Spleen (tissue), 13 donors: ENCODE measurements at regions of chr20 and their contacts with region 1.

Region 1: GRCh38 chr20:3795511-3796468 is at the start of gene CDC25B:
- DNase-seq: peak; percentile 97
- H3K4me3 ChIP-seq: peak within 1 kb of the TSS; percentile 48 to 87 (median 61)
- H3K27ac ChIP-seq: peak within 1 kb of the TSS; percentile 92 to 99 (median 97)
- H3K4me1 ChIP-seq: peaks cover 36 to 64% (median 60%) of the 10 kb centered on the region in 6 donors
- H3K27me3 ChIP-seq: no peaks in the 10 kb centered on the region
- CTCF ChIP-seq: peak; percentile 31 to 83 (median 67)
- POLR2A ChIP-seq: peak in 1 of 3 donors; percentile 54
- total RNA-seq, gene CDC25B: 48.3 to 67.7 (median 55.1) TPM

Region 2: GRCh38 chr20:3323398-3323797 is 472.4 kb before region 1 on chr20:
- intact Hi-C with region 1: no loop called
- DNase-seq: no peak
- H3K4me3 ChIP-seq: no peak overlapping the region
- H3K27ac ChIP-seq: no peak overlapping the region
- H3K4me1 ChIP-seq: no peaks in the 10 kb centered on the region
- H3K27me3 ChIP-seq: no peaks in the 10 kb centered on the region
- CTCF ChIP-seq: no peak
- POLR2A ChIP-seq: no peak

Region 3: GRCh38 chr20:3854462-3854871 is 58.7 kb after region 1 on chr20:
- intact Hi-C with region 1: loop called (anchors 10 kb)
- DNase-seq: no peak
- H3K4me3 ChIP-seq: no peak overlapping the region
- H3K27ac ChIP-seq: peak overlapping the region in 3 of 8 donors; percentile 39 to 54 (median 53)
- H3K4me1 ChIP-seq: peaks cover 0 to 35% (median 11%) of the 10 kb centered on the region in 6 donors
- H3K27me3 ChIP-seq: no peaks in the 10 kb centered on the region
- CTCF ChIP-seq: no peak
- POLR2A ChIP-seq: no peak

Region 4: DNA sequence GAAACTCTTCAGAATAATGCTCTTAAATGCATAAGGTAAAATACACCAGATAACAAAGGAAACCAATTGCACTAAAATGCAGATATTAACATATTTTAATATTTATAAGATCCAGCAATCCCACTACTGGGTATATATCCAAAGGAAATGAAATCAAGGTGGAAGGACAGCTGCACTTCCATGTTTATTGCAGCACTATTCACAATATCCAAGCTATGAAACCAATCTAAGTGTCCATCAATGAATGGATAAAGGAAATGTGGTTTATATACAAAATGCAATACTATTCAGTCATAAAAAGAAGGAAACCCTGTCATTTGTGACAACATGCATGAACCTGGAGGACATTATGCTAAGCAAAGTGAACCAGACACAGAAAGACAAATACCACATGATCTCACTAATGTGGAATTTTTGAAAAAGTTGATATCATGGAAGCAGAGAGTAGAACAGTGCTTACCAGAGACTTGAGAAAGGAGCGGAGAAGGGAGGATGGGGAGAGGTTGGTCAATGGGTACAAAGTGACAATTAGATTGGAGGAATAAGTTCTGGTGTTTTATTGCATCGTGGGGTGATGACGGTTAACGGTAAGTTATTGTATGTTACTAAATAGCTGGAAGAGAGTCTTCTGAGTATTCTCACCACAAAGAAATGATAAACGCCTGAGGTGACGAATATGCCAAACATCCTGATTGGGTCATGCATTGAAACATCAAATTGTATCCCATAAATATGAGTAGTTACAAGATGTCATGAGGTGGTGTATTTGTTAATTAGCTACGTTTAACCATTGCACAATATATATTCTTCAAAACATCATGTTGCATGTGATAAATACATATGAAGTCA is 257.5 kb after region 1 on chr20:
- intact Hi-C with region 1: no loop called
- DNase-seq: no peak
- H3K4me3 ChIP-seq: no peak overlapping the region
- H3K27ac ChIP-seq: no peak overlapping the region
- H3K4me1 ChIP-seq: peaks cover 0 to 8% (median 3%) of the 10 kb centered on the region in 6 donors
- H3K27me3 ChIP-seq: no peaks in the 10 kb centered on the region
- CTCF ChIP-seq: no peak
- POLR2A ChIP-seq: no peak

Region 5: DNA sequence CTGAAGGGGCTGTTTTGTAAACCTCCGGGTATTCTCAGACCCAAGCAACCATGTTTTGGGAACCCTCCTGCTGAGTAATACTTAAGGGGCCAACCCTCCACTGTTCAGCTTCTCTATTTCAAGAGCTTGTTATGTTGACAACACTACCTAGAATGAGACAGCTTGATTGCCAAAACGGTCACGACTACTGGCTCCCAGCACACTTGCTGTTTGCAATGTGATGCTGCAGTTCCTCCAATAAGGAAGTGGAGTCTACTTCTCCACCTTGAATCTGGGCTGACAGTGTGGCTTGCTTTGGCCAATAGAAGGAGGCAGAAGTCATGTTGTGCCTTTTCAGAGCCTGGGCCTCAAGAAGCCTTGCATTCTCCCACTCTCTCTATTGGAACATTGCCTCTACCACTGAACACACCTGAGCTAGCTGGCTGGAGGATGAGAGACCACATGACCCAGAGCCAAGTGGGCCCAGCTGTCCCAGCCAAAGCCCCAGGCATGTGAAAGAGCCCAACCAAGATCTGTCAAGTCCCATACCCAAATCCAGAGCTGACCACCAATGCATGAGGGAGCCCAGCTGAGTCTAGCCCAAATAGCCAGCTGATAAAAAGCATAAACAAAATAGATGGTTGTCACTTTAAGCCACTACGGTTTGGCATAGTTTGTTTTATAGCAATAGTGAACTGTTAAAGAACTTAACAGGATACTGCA is 1033.9 kb after region 1 on chr20:
- intact Hi-C with region 1: no loop called
- DNase-seq: no peak
- H3K4me3 ChIP-seq: peak overlapping the region in 2 of 8 donors; percentile 3 to 59
- H3K27ac ChIP-seq: peak overlapping the region in 7 of 8 donors; percentile 81 to 97 (median 89)
- H3K4me1 ChIP-seq: peaks cover 0 to 55% (median 7%) of the 10 kb centered on the region in 6 donors
- H3K27me3 ChIP-seq: no peaks in the 10 kb centered on the region
- CTCF ChIP-seq: peak in 1 of 11 experiments; percentile 22
- POLR2A ChIP-seq: no peak